Endothelial cell of umbilical vein (primary cell): ENCODE measurements at regions of chr3 and their contacts with region 1.

Region 1: GRCh38 chr3:43223670-43224364 is 62.5 kb upstream of the SNRK start:
- DNase-seq: peak; percentile 63
- H3K4me3 ChIP-seq: no peak overlapping the region
- H3K27ac ChIP-seq: peak overlapping the region; percentile 14
- H3K4me1 ChIP-seq: no peaks in the 10 kb centered on the region
- H3K27me3 ChIP-seq: no peaks in the 10 kb centered on the region
- CTCF ChIP-seq: peak; percentile 21 to 34
- POLR2A ChIP-seq: no peak

Region 2: GRCh38 chr3:42961633-42962032 is 262.2 kb before region 1 on chr3:
- CTCF ChIA-PET with region 1: interaction called, 15 read pairs
- POLR2A ChIA-PET with region 1: no interaction called
- dilution Hi-C with region 1: no loop called
- intact Hi-C with region 1: no loop called
- DNase-seq: peak; percentile 55
- H3K4me3 ChIP-seq: no peak overlapping the region
- H3K27ac ChIP-seq: no peak overlapping the region
- H3K4me1 ChIP-seq: no peaks in the 10 kb centered on the region
- H3K27me3 ChIP-seq: peaks cover 3 to 5% of the 10 kb centered on the region in 2 experiments
- CTCF ChIP-seq: peak; percentile 41 to 42
- POLR2A ChIP-seq: no peak

Region 3: DNA sequence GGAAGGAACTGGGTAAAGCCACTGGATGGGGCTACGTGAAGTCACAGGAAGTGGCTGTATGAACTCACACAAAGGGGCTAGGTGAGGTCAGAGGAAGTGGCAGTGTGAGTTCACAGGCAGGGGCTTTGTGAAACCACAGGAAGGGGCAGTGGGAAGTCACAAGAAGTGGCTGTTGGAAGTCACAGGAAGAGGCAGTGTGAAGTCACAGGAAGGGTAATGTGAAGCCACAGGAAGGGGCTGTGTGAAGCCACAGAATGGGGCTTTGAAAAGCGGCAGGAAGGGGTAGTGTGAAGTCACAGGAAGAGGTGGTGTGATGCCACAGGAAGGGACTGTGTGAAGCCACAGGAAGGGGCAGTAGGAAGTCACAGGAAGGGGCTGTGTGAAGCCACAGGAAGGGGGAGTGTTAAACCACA is 210.1 kb before region 1 on chr3:
- CTCF ChIA-PET with region 1: no interaction called
- POLR2A ChIA-PET with region 1: no interaction called
- dilution Hi-C with region 1: no loop called
- intact Hi-C with region 1: no loop called
- DNase-seq: no peak
- H3K4me3 ChIP-seq: no peak overlapping the region
- H3K27ac ChIP-seq: no peak overlapping the region
- H3K4me1 ChIP-seq: no peaks in the 10 kb centered on the region
- H3K27me3 ChIP-seq: no peaks in the 10 kb centered on the region
- CTCF ChIP-seq: no peak
- POLR2A ChIP-seq: no peak

Region 4: DNA sequence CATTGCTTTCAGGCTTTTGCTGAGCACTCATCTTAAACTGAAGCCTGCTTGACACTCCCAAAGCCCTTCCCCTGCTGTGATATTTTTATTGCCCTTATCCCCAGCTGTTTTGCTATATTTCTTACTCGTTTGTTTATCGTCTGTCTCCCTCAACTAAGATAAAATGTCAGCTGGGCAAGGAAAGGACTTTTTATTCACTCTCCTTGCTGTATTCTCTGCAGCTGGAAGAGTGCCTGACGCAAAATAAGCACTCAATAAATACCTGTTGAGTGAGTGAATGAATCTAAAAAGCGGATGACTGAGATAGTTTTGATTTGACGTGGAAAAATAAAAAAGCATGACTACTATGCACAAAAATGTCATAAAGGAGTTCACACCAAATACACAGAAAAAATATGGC is 33.2 kb before region 1 on chr3:
- CTCF ChIA-PET with region 1: interaction called, 12 read pairs
- POLR2A ChIA-PET with region 1: no interaction called
- dilution Hi-C with region 1: no loop called
- intact Hi-C with region 1: no loop called
- DNase-seq: peak; percentile 52
- H3K4me3 ChIP-seq: no peak overlapping the region
- H3K27ac ChIP-seq: peak overlapping the region; percentile 90
- H3K4me1 ChIP-seq: peaks cover 67% of the 10 kb centered on the region
- H3K27me3 ChIP-seq: no peaks in the 10 kb centered on the region
- CTCF ChIP-seq: no peak
- POLR2A ChIP-seq: no peak

Region 5: DNA sequence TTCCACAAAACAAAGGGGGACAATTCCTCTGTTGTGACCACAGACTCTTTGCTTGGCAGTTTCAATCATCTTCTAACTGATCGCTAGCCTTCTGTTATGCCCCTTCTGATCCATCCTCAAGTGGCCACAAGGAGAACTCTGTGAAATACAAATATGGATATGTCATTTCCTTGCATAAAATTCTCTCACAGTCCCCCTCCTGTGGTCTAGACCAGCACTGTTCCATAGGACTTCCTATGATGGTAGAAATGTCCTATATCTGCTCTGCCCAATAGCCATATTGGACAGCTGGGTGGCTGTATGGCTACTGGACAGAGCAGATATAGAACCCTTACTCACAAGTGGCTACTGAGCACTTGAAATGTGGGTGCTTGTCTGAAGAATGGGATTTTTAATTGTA is 36.6 kb after region 1 on chr3:
- CTCF ChIA-PET with region 1: interaction called, 5 read pairs
- POLR2A ChIA-PET with region 1: no interaction called
- dilution Hi-C with region 1: no loop called
- intact Hi-C with region 1: loop called (anchors 1 kb)
- DNase-seq: peak; percentile 17
- H3K4me3 ChIP-seq: no peak overlapping the region
- H3K27ac ChIP-seq: no peak overlapping the region
- H3K4me1 ChIP-seq: no peaks in the 10 kb centered on the region
- H3K27me3 ChIP-seq: no peaks in the 10 kb centered on the region
- CTCF ChIP-seq: no peak
- POLR2A ChIP-seq: no peak

Region 6: DNA sequence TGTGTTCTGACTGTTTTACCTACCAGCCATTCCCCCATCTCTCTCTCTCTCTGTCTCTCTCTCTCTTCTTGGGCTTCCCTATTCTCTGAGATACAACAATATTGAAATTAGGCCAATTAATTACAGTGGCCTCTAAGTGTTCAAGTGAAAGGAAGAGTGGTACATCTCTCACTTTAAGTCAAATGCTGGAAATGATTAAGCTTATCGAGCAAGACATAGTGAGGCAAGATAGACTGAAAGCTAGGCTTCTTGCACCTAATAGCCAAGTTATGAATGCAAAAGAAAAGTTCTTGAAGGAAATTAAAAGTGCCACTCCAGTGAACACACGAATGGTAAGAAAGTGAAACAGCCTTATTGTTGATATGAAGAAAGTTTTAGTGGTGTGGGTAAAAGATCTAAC is 83.8 kb after region 1 on chr3:
- CTCF ChIA-PET with region 1: interaction called, 19 read pairs
- POLR2A ChIA-PET with region 1: no interaction called
- dilution Hi-C with region 1: no loop called
- intact Hi-C with region 1: no loop called
- DNase-seq: no peak
- H3K4me3 ChIP-seq: no peak overlapping the region
- H3K27ac ChIP-seq: no peak overlapping the region
- H3K4me1 ChIP-seq: no peaks in the 10 kb centered on the region
- H3K27me3 ChIP-seq: no peaks in the 10 kb centered on the region
- CTCF ChIP-seq: no peak
- POLR2A ChIP-seq: no peak

Region 7: GRCh38 chr3:43345877-43346276 is 122.1 kb after region 1 on chr3:
- CTCF ChIA-PET with region 1: interaction called, 9 read pairs
- POLR2A ChIA-PET with region 1: no interaction called
- dilution Hi-C with region 1: no loop called
- intact Hi-C with region 1: loop called (anchors 5 kb)
- DNase-seq: no peak
- H3K4me3 ChIP-seq: no peak overlapping the region
- H3K27ac ChIP-seq: no peak overlapping the region
- H3K4me1 ChIP-seq: peaks cover 7% of the 10 kb centered on the region
- H3K27me3 ChIP-seq: no peaks in the 10 kb centered on the region
- CTCF ChIP-seq: no peak
- POLR2A ChIP-seq: no peak

Region 8: GRCh38 chr3:43400781-43401730 is 177.2 kb after region 1 on chr3:
- CTCF ChIA-PET with region 1: no interaction called
- POLR2A ChIA-PET with region 1: no interaction called
- dilution Hi-C with region 1: no loop called
- intact Hi-C with region 1: no loop called
- DNase-seq: no peak
- H3K4me3 ChIP-seq: no peak overlapping the region
- H3K27ac ChIP-seq: no peak overlapping the region
- H3K4me1 ChIP-seq: peaks cover 16% of the 10 kb centered on the region
- H3K27me3 ChIP-seq: no peaks in the 10 kb centered on the region
- CTCF ChIP-seq: no peak
- POLR2A ChIP-seq: no peak

Region 9: GRCh38 chr3:43426388-43426787 is 202.6 kb after region 1 on chr3:
- CTCF ChIA-PET with region 1: no interaction called
- POLR2A ChIA-PET with region 1: no interaction called
- dilution Hi-C with region 1: no loop called
- intact Hi-C with region 1: no loop called
- DNase-seq: no peak
- H3K4me3 ChIP-seq: no peak overlapping the region
- H3K27ac ChIP-seq: no peak overlapping the region
- H3K4me1 ChIP-seq: no peaks in the 10 kb centered on the region
- H3K27me3 ChIP-seq: no peaks in the 10 kb centered on the region
- CTCF ChIP-seq: no peak
- POLR2A ChIP-seq: no peak

Region 10: GRCh38 chr3:43540624-43541023 is 316.8 kb after region 1 on chr3:
- CTCF ChIA-PET with region 1: interaction called, 4 read pairs
- POLR2A ChIA-PET with region 1: no interaction called
- dilution Hi-C with region 1: no loop called
- intact Hi-C with region 1: loop called (anchors 2 kb)
- DNase-seq: no peak
- H3K4me3 ChIP-seq: no peak overlapping the region
- H3K27ac ChIP-seq: no peak overlapping the region
- H3K4me1 ChIP-seq: peaks cover 3% of the 10 kb centered on the region
- H3K27me3 ChIP-seq: no peaks in the 10 kb centered on the region
- CTCF ChIP-seq: no peak
- POLR2A ChIP-seq: no peak

Region 11: DNA sequence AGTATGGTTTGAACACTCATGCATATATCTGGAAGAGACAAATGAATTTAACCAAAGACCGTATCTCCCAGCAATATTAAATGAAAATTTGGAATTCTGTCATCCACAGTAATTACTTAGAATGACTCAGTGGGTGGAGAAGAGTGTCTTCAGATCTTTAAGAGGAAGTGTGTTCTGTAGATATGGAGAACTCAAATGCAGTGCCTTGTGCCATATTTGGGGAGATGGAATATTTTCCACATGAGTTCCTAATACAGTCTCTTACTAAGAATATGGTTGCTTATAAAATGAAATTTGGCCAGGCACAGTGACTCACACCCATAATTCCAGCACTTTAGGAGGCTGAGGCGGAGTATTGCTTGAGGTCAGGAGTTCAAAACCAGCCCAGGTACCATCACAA is 357.5 kb after region 1 on chr3:
- CTCF ChIA-PET with region 1: no interaction called
- POLR2A ChIA-PET with region 1: no interaction called
- dilution Hi-C with region 1: no loop called
- intact Hi-C with region 1: no loop called
- DNase-seq: no peak
- H3K4me3 ChIP-seq: no peak overlapping the region
- H3K27ac ChIP-seq: no peak overlapping the region
- H3K4me1 ChIP-seq: peaks cover 20% of the 10 kb centered on the region
- H3K27me3 ChIP-seq: no peaks in the 10 kb centered on the region
- CTCF ChIP-seq: no peak
- POLR2A ChIP-seq: no peak